ENCODE measurements at regions of chr20 and their contacts with region 1.

Region 1: DNA sequence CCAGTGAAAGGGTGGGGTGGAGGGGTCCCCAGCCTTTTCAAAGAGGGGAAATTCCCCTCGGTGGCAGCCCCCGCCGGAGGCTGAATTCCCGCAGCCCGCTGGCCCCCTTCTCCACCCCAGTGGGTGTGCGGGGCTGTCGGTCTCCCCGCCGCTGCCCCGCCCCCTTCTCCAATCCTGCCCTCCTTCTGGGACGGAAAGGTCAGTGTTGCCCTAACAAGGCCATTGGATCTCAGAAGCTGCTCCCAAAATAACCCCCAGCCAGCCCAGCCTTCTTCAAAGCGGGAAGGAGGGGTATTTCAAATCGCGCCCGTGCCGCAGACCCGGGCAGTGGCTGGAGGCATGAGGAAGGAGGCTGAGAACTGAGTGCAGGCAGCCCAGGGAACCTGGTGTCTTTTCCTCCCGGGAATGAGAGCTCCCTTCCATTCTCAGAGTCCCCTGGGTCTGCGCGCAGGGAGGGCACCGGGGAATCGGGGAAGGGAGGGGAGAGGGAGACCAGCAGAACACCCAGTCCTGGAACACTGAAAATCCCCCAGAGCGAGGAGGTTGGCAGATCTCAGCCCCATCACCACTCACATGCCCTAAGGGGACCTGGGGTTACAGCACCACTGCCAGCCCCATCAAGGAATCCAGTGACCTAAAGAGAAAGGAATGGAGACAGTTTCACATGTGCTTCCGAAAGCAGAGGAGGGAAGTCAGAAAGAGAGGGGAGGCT is at the start of gene JPH2:
- DNase-seq: no peak
- ATAC-seq: peak; percentile 20
- H3K4me3 Mint-ChIP-seq: peak within 1 kb of the TSS; percentile 22
- H3K27ac Mint-ChIP-seq: no peak within 1 kb of the TSS
- H3K4me1 Mint-ChIP-seq: peaks cover 17% of the 10 kb centered on the region
- H3K27me3 Mint-ChIP-seq: peaks cover 62% of the 10 kb centered on the region
- total RNA-seq, gene JPH2: not detected

Region 2: GRCh38 chr20:44019638-44020335 is 167.4 kb before region 1 on chr20:
- CTCF ChIA-PET with region 1: no interaction called
- DNase-seq: peak; percentile 86
- ATAC-seq: peak; percentile 76
- H3K4me3 Mint-ChIP-seq: peak overlapping the region; percentile 27
- H3K27ac Mint-ChIP-seq: peak overlapping the region; percentile 76
- H3K4me1 Mint-ChIP-seq: peaks cover 27% of the 10 kb centered on the region
- H3K27me3 Mint-ChIP-seq: peaks cover 88% of the 10 kb centered on the region

Region 3: DNA sequence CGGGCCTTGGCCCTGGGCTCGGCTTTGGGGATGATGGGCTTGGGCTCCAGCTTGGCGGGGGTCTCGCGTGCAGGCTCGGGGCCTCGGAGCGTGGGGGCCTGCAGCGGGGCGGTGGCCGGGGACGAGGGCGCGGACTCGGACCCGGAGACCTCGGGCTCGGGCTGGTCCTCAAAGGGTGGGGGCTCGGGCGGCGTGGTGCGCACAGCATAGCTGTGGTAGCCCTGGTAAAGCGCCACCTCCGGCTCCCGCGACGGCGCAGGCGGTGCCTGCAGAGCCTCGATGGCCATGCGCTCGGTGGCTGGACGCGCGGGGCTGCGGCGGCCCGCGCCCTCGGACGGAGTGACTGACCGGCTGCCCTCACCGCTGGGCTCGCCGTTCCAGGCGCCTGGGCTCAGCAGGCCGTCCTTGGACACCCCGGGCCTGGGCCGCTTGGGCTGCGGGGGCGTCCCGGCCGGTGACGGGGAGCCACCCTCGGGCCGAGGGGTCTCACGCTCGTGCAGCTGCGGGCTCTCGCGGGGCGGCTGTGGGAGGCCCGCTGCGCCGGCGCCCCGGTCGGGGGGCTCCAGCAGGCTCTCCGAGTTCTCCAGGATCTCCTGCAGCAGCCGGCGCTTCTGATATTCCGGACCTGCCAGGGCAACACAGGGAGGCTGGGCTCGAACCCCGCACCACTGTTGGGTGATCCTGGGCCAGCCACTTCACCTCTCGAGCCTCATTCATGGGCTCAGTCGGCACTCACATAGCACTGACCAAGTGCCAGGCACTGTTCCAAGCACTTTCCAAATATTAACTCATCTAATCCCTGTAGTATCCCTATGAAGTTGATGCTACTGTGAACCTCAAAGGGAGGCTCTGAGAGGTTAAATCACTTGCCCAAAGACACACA is 71.2 kb before region 1 on chr20:
- CTCF ChIA-PET with region 1: interaction called, 129 read pairs
- DNase-seq: no peak
- ATAC-seq: no peak
- H3K4me3 Mint-ChIP-seq: no peak overlapping the region
- H3K27ac Mint-ChIP-seq: no peak overlapping the region
- H3K4me1 Mint-ChIP-seq: peaks cover 9% of the 10 kb centered on the region
- H3K27me3 Mint-ChIP-seq: peaks cover 28% of the 10 kb centered on the region

Region 4: GRCh38 chr20:44129911-44130718 is 57.1 kb before region 1 on chr20:
- CTCF ChIA-PET with region 1: interaction called, 10 read pairs
- DNase-seq: no peak
- ATAC-seq: no peak
- H3K4me3 Mint-ChIP-seq: no peak overlapping the region
- H3K27ac Mint-ChIP-seq: no peak overlapping the region
- H3K4me1 Mint-ChIP-seq: no peaks in the 10 kb centered on the region
- H3K27me3 Mint-ChIP-seq: peaks cover 12% of the 10 kb centered on the region

Region 5: GRCh38 chr20:44241796-44242195 is 54.6 kb after region 1 on chr20:
- CTCF ChIA-PET with region 1: no interaction called
- DNase-seq: no peak
- ATAC-seq: no peak
- H3K4me3 Mint-ChIP-seq: no peak overlapping the region
- H3K27ac Mint-ChIP-seq: no peak overlapping the region
- H3K4me1 Mint-ChIP-seq: no peaks in the 10 kb centered on the region
- H3K27me3 Mint-ChIP-seq: peaks cover 17% of the 10 kb centered on the region

Region 6: DNA sequence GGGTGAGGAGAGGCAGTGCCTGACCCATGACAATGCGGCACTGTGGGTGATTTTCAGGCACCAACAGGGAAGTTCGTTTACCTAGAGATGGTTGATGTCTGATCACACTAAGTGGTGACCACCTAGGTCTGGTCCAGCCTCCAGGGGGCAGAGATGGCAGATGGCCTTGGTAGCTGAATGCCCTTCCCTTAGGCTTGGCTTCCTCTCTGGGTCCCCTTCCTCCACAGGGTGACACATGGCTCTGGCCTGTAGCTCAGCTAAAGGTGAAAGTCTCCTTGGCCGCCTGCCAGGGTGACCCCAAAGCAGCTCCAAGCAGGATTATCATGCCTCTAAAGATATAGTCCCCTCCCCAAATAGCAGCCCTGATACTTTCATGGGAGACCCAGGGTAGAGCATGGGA is 66.3 kb after region 1 on chr20:
- CTCF ChIA-PET with region 1: no interaction called
- DNase-seq: no peak
- ATAC-seq: no peak
- H3K4me3 Mint-ChIP-seq: no peak overlapping the region
- H3K27ac Mint-ChIP-seq: no peak overlapping the region
- H3K4me1 Mint-ChIP-seq: no peaks in the 10 kb centered on the region
- H3K27me3 Mint-ChIP-seq: peaks cover 6% of the 10 kb centered on the region